Endothelial cell of umbilical vein (primary cell): ENCODE measurements at regions of chr19 and their contacts with region 1.

Region 1: GRCh38 chr19:54266133-54266532 is 9.1 kb upstream of the LILRB5 start:
- DNase-seq: peak; percentile 70
- H3K4me3 ChIP-seq: no peak overlapping the region
- H3K27ac ChIP-seq: no peak overlapping the region
- H3K4me1 ChIP-seq: no peaks in the 10 kb centered on the region
- H3K27me3 ChIP-seq: peaks cover 6 to 9% of the 10 kb centered on the region in 2 experiments
- CTCF ChIP-seq: peak; percentile 72 to 83
- POLR2A ChIP-seq: no peak

Region 2: GRCh38 chr19:54137086-54137921 is 128.8 kb before region 1 on chr19 and contains the start of gene CNOT3:
- CTCF ChIA-PET with region 1: interaction called, 12 read pairs
- POLR2A ChIA-PET with region 1: no interaction called
- dilution Hi-C with region 1: no loop called
- intact Hi-C with region 1: no loop called
- DNase-seq: peak; percentile 100
- H3K4me3 ChIP-seq: peak within 1 kb of the TSS; percentile 66 to 98 (median 69)
- H3K27ac ChIP-seq: peak within 1 kb of the TSS; percentile 71
- H3K4me1 ChIP-seq: peaks cover 17% of the 10 kb centered on the region
- H3K27me3 ChIP-seq: no peaks in the 10 kb centered on the region
- CTCF ChIP-seq: no peak
- POLR2A ChIP-seq: peak; percentile 72
- total RNA-seq, gene CNOT3: 62.4 and 74.7 TPM in 2 replicates

Region 3: GRCh38 chr19:54168174-54168917 is 97.8 kb before region 1 on chr19:
- CTCF ChIA-PET with region 1: interaction called, 21 read pairs
- POLR2A ChIA-PET with region 1: no interaction called
- dilution Hi-C with region 1: no loop called
- intact Hi-C with region 1: loop called (anchors 1 kb)
- DNase-seq: peak; percentile 82
- H3K4me3 ChIP-seq: no peak overlapping the region
- H3K27ac ChIP-seq: no peak overlapping the region
- H3K4me1 ChIP-seq: no peaks in the 10 kb centered on the region
- H3K27me3 ChIP-seq: peaks cover 0 to 8% of the 10 kb centered on the region in 2 experiments
- CTCF ChIP-seq: peak; percentile 82 to 96
- POLR2A ChIP-seq: no peak

Region 4: DNA sequence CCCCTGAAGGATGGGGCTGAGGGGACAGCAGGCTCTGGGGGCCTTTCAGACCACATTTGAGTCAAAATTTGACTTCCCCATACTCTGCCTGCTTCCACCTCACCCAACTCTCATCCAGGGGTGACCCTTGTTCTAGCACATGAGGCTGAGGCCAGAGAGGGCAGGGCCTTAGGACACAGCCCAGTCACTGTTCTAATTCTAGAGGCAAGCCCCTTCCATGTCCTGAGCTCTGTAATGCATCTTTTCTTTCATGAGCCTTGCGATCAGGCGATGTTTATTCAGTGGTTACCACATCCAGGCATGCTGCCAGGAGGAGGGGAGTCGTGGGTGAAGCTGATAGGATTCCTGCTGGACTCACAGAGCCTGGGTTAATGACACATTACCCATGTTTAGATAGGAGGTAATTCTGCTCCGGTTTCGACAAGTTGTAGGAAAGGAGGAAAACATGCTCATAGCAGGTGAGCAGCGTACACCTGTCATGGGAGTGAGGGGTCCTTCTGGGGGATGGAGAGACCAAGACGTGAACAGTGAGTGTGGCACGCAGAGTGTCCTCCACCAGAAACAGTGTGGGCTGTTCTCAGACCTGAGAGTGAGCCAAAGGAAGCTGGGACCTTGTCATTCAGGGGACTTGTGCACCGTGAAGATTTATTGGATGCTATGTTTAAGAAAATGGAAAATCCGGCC is 56.2 kb before region 1 on chr19:
- CTCF ChIA-PET with region 1: interaction called, 16 read pairs
- POLR2A ChIA-PET with region 1: no interaction called
- dilution Hi-C with region 1: no loop called
- intact Hi-C with region 1: no loop called
- DNase-seq: peak; percentile 96
- H3K4me3 ChIP-seq: no peak overlapping the region
- H3K27ac ChIP-seq: peak overlapping the region; percentile 22
- H3K4me1 ChIP-seq: peaks cover 24% of the 10 kb centered on the region
- H3K27me3 ChIP-seq: no peaks in the 10 kb centered on the region
- CTCF ChIP-seq: no peak
- POLR2A ChIP-seq: peak; percentile 7

Region 5: DNA sequence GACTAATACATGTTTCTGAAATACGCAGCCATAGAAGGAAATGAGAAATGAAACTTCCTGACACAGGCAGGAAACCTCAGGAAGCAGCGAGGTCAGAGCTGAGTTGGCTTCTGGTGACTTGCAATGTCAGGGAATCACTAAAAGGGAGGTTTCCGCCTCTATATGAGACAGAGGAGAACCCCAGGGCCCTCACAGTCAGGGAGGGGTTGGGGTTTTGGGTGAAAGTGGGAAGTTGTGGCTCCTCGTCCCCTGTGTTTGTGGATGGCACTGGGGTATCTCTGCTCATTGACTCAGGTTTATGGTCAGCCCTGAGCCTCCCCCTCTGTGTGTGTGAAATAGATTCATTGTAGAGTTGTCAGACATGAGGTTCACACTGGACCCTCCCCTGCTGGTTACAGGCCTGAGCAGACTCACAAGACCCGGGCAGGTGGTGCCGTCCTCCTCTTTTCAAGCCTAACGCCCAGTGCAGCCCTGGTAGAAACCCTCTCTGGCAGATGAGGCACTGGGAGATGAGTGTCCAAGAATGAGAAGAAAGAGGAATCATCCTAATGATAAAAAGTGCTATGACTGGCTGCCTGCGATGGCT is 18.0 kb before region 1 on chr19:
- CTCF ChIA-PET with region 1: interaction called, 35 read pairs
- POLR2A ChIA-PET with region 1: no interaction called
- dilution Hi-C with region 1: no loop called
- intact Hi-C with region 1: no loop called
- DNase-seq: peak; percentile 75
- H3K4me3 ChIP-seq: peak overlapping the region in 1 of 3 experiments; percentile 14
- H3K27ac ChIP-seq: peak overlapping the region; percentile 68
- H3K4me1 ChIP-seq: peaks cover 19% of the 10 kb centered on the region
- H3K27me3 ChIP-seq: no peaks in the 10 kb centered on the region
- CTCF ChIP-seq: no peak
- POLR2A ChIP-seq: peak; percentile 63